GM12878 (cell line): ENCODE measurements at regions of chr11 and their contacts with region 1.

Region 1: DNA sequence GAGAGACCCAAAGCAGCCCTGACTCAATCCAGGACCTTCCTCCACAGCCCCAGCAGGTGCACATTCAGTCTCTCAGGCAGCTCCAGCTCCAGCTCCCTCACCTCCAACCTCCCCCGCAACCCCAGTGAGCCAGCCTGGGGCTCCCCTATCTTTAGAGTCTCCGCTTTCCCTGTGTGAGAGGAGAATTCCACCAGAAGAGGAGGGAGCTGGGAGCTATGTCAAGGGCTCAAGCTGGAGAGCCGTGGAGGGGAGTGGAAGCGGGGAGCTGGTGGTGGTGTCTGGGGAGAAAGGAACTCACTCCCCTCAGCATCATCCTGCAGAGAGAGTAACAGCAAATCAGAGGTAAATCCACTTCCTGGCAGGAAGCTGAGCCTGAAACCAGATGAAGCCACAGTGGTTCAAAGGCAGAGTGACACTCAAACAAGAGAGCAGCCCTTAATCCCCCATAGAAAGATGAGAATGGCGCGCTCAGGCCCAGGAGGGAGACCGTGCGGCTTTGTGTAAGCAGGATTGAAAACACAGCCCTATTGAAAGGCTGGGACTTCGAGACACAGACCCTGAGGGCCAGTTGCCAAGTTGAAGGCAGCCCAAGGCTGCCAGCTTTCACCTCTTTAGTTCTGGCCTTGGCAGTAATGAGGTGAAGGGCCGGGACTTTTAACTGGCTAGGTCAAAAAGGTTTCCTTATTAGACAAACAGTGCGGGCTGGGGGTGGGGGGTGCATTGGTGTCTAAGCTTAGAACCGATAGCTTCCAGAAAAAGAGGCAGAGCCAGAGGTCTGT is 21.4 kb upstream of the CDON start:
- DNase-seq: no peak
- ATAC-seq: peak; percentile 66
- H3K4me3 ChIP-seq: no peak overlapping the region
- H3K27ac ChIP-seq: no peak overlapping the region
- H3K4me1 ChIP-seq: peaks cover 10% of the 10 kb centered on the region
- H3K27me3 ChIP-seq: no peaks in the 10 kb centered on the region
- CTCF ChIP-seq: no peak
- EP300 ChIP-seq: no peak
- POLR2A ChIP-seq: no peak
- RAD21 ChIP-seq: no peak

Region 2: GRCh38 chr11:125846188-125846587 is 237.8 kb before region 1 on chr11:
- CTCF ChIA-PET with region 1: no interaction called
- POLR2A ChIA-PET with region 1: no interaction called
- RAD21 ChIA-PET with region 1: no interaction called
- SMC1A ChIA-PET with region 1: no interaction called
- in situ Hi-C with region 1: no loop called
- intact Hi-C with region 1: no loop called
- DNase-seq: no peak
- ATAC-seq: no peak
- H3K4me3 ChIP-seq: no peak overlapping the region
- H3K27ac ChIP-seq: no peak overlapping the region
- H3K4me1 ChIP-seq: no peaks in the 10 kb centered on the region
- H3K27me3 ChIP-seq: no peaks in the 10 kb centered on the region
- CTCF ChIP-seq: no peak
- EP300 ChIP-seq: no peak
- POLR2A ChIP-seq: no peak
- RAD21 ChIP-seq: no peak

Region 3: GRCh38 chr11:126100716-126101115 is 16.7 kb after region 1 on chr11:
- CTCF ChIA-PET with region 1: no interaction called
- POLR2A ChIA-PET with region 1: no interaction called
- RAD21 ChIA-PET with region 1: no interaction called
- SMC1A ChIA-PET with region 1: interaction called, 5 read pairs
- in situ Hi-C with region 1: no loop called
- intact Hi-C with region 1: loop called (anchors 1 kb)
- DNase-seq: no peak
- ATAC-seq: no peak
- H3K4me3 ChIP-seq: no peak overlapping the region
- H3K27ac ChIP-seq: no peak overlapping the region
- H3K4me1 ChIP-seq: peaks cover 10% of the 10 kb centered on the region
- H3K27me3 ChIP-seq: no peaks in the 10 kb centered on the region; a peak in 1 of 4 replicates
- CTCF ChIP-seq: no peak
- EP300 ChIP-seq: no peak
- POLR2A ChIP-seq: no peak
- RAD21 ChIP-seq: no peak

Region 4: DNA sequence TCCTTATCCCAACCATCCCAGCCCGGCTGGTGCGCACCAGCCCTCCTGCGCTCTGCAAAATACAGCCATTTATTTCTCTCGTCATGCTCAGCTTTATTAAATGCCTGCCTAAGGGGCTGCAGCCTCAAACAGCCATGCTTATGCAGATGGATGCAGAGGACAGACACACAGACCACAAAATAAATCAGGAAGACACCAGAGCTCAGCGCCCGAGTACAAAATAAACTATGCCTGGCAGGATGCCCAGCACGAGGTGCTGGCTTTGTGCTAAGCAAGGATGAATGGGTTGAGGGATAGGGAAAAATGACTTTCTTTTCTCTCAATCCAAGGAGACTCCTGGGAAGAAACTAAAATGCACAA is 56.9 kb after region 1 on chr11:
- CTCF ChIA-PET with region 1: no interaction called
- POLR2A ChIA-PET with region 1: no interaction called
- RAD21 ChIA-PET with region 1: no interaction called
- SMC1A ChIA-PET with region 1: no interaction called
- in situ Hi-C with region 1: no loop called
- intact Hi-C with region 1: no loop called
- DNase-seq: no peak
- ATAC-seq: no peak
- H3K4me3 ChIP-seq: no peak overlapping the region
- H3K27ac ChIP-seq: no peak overlapping the region
- H3K4me1 ChIP-seq: no peaks in the 10 kb centered on the region
- H3K27me3 ChIP-seq: peaks cover 0 to 3% of the 10 kb centered on the region in 2 experiments
- CTCF ChIP-seq: no peak
- EP300 ChIP-seq: no peak
- POLR2A ChIP-seq: no peak
- RAD21 ChIP-seq: no peak

Region 5: GRCh38 chr11:126268708-126269579 is 184.9 kb after region 1 on chr11 and contains the starts of genes FOXRED1 and SRPRA:
- CTCF ChIA-PET with region 1: no interaction called
- POLR2A ChIA-PET with region 1: no interaction called
- RAD21 ChIA-PET with region 1: no interaction called
- SMC1A ChIA-PET with region 1: no interaction called
- in situ Hi-C with region 1: no loop called
- intact Hi-C with region 1: no loop called
- DNase-seq: peak; percentile 93
- ATAC-seq: peak; percentile 99
- H3K4me3 ChIP-seq: peak within 1 kb of the TSS; percentile 96
- H3K27ac ChIP-seq: peak within 1 kb of the TSS; percentile 85
- H3K4me1 ChIP-seq: peaks cover 3% of the 10 kb centered on the region; the same call in 1 of the 2 replicates
- H3K27me3 ChIP-seq: no peaks in the 10 kb centered on the region
- CTCF ChIP-seq: no peak
- EP300 ChIP-seq: peak in 1 of 2 experiments; percentile 22; a peak in 1 of 4 replicates
- POLR2A ChIP-seq: peak; percentile 94
- RAD21 ChIP-seq: no peak
- polyA plus RNA-seq, gene FOXRED1: 9.9 to 10.5 TPM
- polyA plus RNA-seq, gene SRPRA: 29.6 to 50.4 TPM